ENCODE measurements at regions of chr15 and their contacts with region 1.

Region 1: GRCh38 chr15:100017140-100017539 is 283.9 kb upstream of the LYSMD4 start:
- DNase-seq: no peak
- ATAC-seq: no peak
- H3K4me3 ChIP-seq: no peak overlapping the region
- H3K27ac ChIP-seq: no peak overlapping the region
- H3K4me1 ChIP-seq: peaks cover 0 to 1% of the 10 kb centered on the region in 2 donors
- H3K27me3 ChIP-seq: no peaks in the 10 kb centered on the region

Region 2: GRCh38 chr15:99818872-99819271 is 198.3 kb before region 1 on chr15:
- intact Hi-C with region 1: no loop called
- DNase-seq: no peak
- ATAC-seq: no peak
- H3K4me3 ChIP-seq: no peak overlapping the region
- H3K27ac ChIP-seq: no peak overlapping the region
- H3K4me1 ChIP-seq: no peaks in the 10 kb centered on the region
- H3K27me3 ChIP-seq: no peaks in the 10 kb centered on the region

Region 3: DNA sequence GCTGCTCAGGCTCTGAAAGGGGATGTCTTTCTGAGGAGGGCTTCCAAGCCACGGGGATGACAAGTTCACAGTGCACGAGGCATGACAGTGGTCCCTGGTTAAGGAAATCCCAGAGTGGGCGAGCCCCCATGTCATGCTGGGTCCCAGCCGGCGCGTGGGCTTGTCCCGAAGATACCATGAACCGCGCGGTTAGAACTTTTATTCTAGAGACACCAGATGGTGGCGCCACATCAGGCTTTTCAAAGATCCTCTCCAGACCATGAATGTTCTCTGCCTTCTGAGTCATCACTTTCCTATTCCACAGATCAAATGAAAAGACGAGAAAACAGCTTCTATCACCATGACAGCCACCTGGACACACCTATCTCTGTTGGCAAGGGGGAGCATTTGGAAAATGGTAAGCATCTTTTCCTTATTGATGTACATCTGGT is 56.1 kb before region 1 on chr15:
- intact Hi-C with region 1: loop called in 1 of 2 experiments (anchors 10 kb)
- DNase-seq: no peak
- ATAC-seq: no peak
- H3K4me3 ChIP-seq: no peak overlapping the region
- H3K27ac ChIP-seq: no peak overlapping the region
- H3K4me1 ChIP-seq: no peaks in the 10 kb centered on the region
- H3K27me3 ChIP-seq: no peaks in the 10 kb centered on the region

Region 4: GRCh38 chr15:100033140-100033857 is 16.2 kb after region 1 on chr15:
- intact Hi-C with region 1: no loop called
- DNase-seq: no peak
- ATAC-seq: peak; percentile 62
- H3K4me3 ChIP-seq: no peak overlapping the region
- H3K27ac ChIP-seq: peak overlapping the region; percentile 9 to 76
- H3K4me1 ChIP-seq: peaks cover 0 to 5% of the 10 kb centered on the region in 2 donors
- H3K27me3 ChIP-seq: no peaks in the 10 kb centered on the region

Region 5: GRCh38 chr15:100111103-100112060 is 94.2 kb after region 1 on chr15:
- intact Hi-C with region 1: no loop called
- DNase-seq: peak; percentile 87 to 90
- ATAC-seq: peak; percentile 87
- H3K4me3 ChIP-seq: no peak overlapping the region
- H3K27ac ChIP-seq: peak overlapping the region; percentile 95 to 99
- H3K4me1 ChIP-seq: peaks cover 0 to 4% of the 10 kb centered on the region in 2 donors
- H3K27me3 ChIP-seq: no peaks in the 10 kb centered on the region

Measured in aorta (tissue), 5 donors.